CD14-positive monocyte (primary cell): ENCODE measurements at regions of chr13 and their contacts with region 1.

Region 1: GRCh38 chr13:44435142-44435982 is 61.7 kb downstream of the SERP2 start:
- DNase-seq: peak; percentile 92 to 97 (median 96)
- H3K4me3 ChIP-seq: peak overlapping the region; percentile 69 to 80 (median 77)
- H3K4me3 Mint-ChIP-seq: peak overlapping the region; percentile 86 to 89
- H3K27ac ChIP-seq: peak overlapping the region; percentile 38 to 72
- H3K27ac Mint-ChIP-seq: peak overlapping the region; percentile 44 to 87 (median 80)
- H3K4me1 ChIP-seq: peaks cover 29 to 38% of the 10 kb centered on the region in 2 donors
- H3K4me1 Mint-ChIP-seq: peaks cover 26% of the 10 kb centered on the region
- H3K27me3 ChIP-seq: peaks cover 8 to 23% of the 10 kb centered on the region in 2 donors
- H3K27me3 Mint-ChIP-seq: peaks cover 11 to 23% (median 13%) of the 10 kb centered on the region in 3 donors
- CTCF ChIP-seq: no peak

Region 2: GRCh38 chr13:43905435-43906031 is 529.8 kb before region 1 on chr13:
- intact Hi-C with region 1: loop called (anchors 2 to 5 kb)
- DNase-seq: peak; percentile 35 to 69 (median 57)
- H3K4me3 ChIP-seq: no peak overlapping the region
- H3K4me3 Mint-ChIP-seq: peak overlapping the region in 1 of 2 donors; percentile 21
- H3K27ac ChIP-seq: no peak overlapping the region
- H3K27ac Mint-ChIP-seq: no peak overlapping the region
- H3K4me1 ChIP-seq: no peaks in the 10 kb centered on the region
- H3K4me1 Mint-ChIP-seq: peaks cover 2% of the 10 kb centered on the region
- H3K27me3 ChIP-seq: peaks cover 31 to 40% of the 10 kb centered on the region in 2 donors
- H3K27me3 Mint-ChIP-seq: peaks cover 30 to 37% (median 32%) of the 10 kb centered on the region in 3 donors
- CTCF ChIP-seq: peak; percentile 81

Region 3: GRCh38 chr13:44136696-44137268 is 298.6 kb before region 1 on chr13:
- intact Hi-C with region 1: loop called (anchors 5 kb)
- DNase-seq: no peak
- H3K4me3 ChIP-seq: no peak overlapping the region
- H3K4me3 Mint-ChIP-seq: no peak overlapping the region
- H3K27ac ChIP-seq: no peak overlapping the region
- H3K27ac Mint-ChIP-seq: peak overlapping the region in 1 of 7 donors; percentile 55
- H3K4me1 ChIP-seq: peaks cover 16 to 24% of the 10 kb centered on the region in 2 donors
- H3K4me1 Mint-ChIP-seq: peaks cover 26% of the 10 kb centered on the region
- H3K27me3 ChIP-seq: no peaks in the 10 kb centered on the region
- H3K27me3 Mint-ChIP-seq: peaks cover 0 to 5% (median 0%) of the 10 kb centered on the region in 3 donors
- CTCF ChIP-seq: no peak

Region 4: DNA sequence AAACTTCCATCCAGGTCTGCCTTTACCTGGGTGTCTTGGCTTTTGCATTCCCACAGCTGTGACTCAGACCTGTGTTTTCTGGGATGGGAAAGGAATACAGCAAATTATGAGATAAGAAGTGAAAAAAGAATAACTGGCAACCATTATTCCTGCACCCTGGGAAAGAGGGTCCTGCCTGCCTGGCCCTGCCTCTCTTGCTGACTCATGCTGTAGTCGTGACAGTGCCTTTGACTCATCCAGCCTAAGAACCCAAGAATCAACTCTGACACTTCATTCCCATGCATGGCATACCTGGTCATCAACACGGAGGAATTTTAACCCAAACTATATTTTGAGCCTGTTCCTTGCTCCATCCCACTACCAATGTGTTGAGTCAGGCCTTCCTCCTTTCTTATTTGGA is 247.1 kb before region 1 on chr13:
- intact Hi-C with region 1: loop called in 1 of 2 experiments (anchors 10 kb)
- DNase-seq: peak in 1 of 3 donors; percentile 22
- H3K4me3 ChIP-seq: no peak overlapping the region
- H3K4me3 Mint-ChIP-seq: no peak overlapping the region
- H3K27ac ChIP-seq: no peak overlapping the region
- H3K27ac Mint-ChIP-seq: no peak overlapping the region
- H3K4me1 ChIP-seq: no peaks in the 10 kb centered on the region
- H3K4me1 Mint-ChIP-seq: peaks cover 9% of the 10 kb centered on the region
- H3K27me3 ChIP-seq: no peaks in the 10 kb centered on the region
- H3K27me3 Mint-ChIP-seq: peaks cover 0 to 2% (median 0%) of the 10 kb centered on the region in 3 donors
- CTCF ChIP-seq: no peak

Region 5: GRCh38 chr13:44300895-44301638 is 134.3 kb before region 1 on chr13:
- intact Hi-C with region 1: loop called in 1 of 2 experiments (anchors 10 kb)
- DNase-seq: peak; percentile 62 to 83 (median 74)
- H3K4me3 ChIP-seq: no peak overlapping the region
- H3K4me3 Mint-ChIP-seq: peak overlapping the region in 1 of 2 donors; percentile 32
- H3K27ac ChIP-seq: peak overlapping the region in 1 of 2 donors; percentile 72
- H3K27ac Mint-ChIP-seq: peak overlapping the region; percentile 28 to 79 (median 69)
- H3K4me1 ChIP-seq: peaks cover 9 to 14% of the 10 kb centered on the region in 2 donors
- H3K4me1 Mint-ChIP-seq: peaks cover 17% of the 10 kb centered on the region
- H3K27me3 ChIP-seq: no peaks in the 10 kb centered on the region
- H3K27me3 Mint-ChIP-seq: peaks cover 0 to 2% (median 2%) of the 10 kb centered on the region in 3 donors
- CTCF ChIP-seq: no peak

Region 6: DNA sequence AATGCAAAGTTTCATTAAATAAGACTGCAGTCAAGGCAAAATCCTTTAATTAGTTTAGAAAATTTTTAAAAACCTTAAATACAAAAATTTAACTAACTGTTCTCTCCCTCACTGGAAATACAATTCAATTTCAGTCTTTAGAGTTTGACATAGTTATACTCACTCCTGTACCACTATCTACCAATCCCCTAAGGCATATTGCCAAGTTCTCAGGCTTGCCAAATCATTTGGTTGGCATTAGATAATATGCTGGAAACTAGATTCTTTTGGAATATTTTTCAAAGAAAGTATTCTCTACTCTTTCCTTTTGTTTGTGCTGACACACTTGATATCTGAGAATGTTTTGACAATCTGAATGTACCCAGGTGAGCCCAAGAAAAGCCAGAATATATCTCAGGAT is 63.6 kb after region 1 on chr13:
- intact Hi-C with region 1: no loop called
- DNase-seq: no peak
- H3K4me3 ChIP-seq: no peak overlapping the region
- H3K4me3 Mint-ChIP-seq: no peak overlapping the region
- H3K27ac ChIP-seq: no peak overlapping the region
- H3K27ac Mint-ChIP-seq: no peak overlapping the region
- H3K4me1 ChIP-seq: no peaks in the 10 kb centered on the region
- H3K4me1 Mint-ChIP-seq: peaks cover 5% of the 10 kb centered on the region
- H3K27me3 ChIP-seq: no peaks in the 10 kb centered on the region
- H3K27me3 Mint-ChIP-seq: peaks cover 0 to 2% (median 1%) of the 10 kb centered on the region in 3 donors
- CTCF ChIP-seq: no peak